H1 (cell line): ENCODE measurements at regions of chr4 and their contacts with region 1.

Region 1: DNA sequence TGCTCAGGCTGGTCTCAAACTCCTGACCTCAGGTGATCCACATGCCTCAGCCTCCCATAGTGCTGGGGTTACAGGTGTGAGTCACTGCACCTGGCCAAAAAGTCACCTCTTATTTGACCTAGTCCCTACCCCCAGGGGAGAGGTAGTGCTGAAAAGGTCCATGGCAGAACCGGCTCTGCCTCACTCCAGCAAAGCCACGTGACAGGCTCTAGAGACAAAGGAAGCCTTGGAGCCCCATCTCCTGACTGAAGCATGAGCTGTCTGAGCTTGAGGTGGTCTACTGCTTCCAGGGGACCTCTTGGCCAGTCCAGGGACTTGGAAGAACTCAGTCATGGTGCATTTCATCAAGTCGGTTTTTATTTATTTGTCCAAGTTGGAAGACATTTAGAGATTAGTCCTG is 52.5 kb upstream of the ZNF518B start:
- DNase-seq: no peak
- H3K4me3 ChIP-seq: no peak overlapping the region
- H3K27ac ChIP-seq: no peak overlapping the region
- H3K4me1 ChIP-seq: 0 out of 7 replicates have a peak, but pooled peaks cover 0 to 3% (median 0%) of the 10 kb centered on the region in 4 experiments
- H3K27me3 ChIP-seq: no peaks in the 10 kb centered on the region
- CTCF ChIP-seq: no peak
- EP300 ChIP-seq: no peak
- POLR2A ChIP-seq: no peak
- RAD21 ChIP-seq: no peak

Region 2: DNA sequence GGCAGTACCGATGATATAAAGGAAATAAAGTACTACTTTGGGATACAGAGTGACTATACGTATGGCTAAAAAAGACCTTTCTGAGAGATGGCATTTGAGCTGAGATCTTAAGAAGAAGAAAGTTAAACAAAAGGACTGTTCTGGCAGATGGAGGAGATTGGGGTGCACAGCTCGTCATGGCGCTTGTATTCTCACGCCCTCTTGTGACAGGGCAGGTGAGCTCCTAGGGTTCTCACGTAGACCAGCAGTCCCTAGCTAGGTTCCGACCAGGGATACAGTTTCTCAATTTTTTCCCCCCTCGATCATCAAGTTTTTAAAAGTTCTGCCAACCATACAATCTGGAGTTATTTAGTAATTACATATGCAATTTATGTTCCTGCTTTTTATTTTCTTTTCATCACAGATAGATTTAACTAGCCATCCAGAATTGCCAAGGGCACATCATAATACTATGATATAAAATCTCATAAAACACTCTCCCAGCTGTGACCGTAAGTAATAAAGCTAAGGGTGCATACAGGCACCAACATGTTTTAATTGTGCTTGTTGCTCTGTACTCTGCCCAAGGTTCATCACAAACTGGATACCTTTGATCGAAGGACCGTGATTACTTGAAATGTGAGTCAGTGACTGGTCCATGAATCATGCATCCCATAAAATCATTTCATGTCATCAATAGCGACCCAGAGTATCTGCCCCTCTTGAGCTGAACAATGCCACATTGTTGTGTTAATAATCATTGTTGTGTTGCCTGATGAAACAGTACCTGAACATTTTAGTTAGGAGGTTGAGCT is 16.9 kb after region 1 on chr4:
- CTCF ChIA-PET with region 1: interaction called, 11 read pairs
- POLR2A ChIA-PET with region 1: no interaction called
- DNase-seq: no peak
- H3K4me3 ChIP-seq: no peak overlapping the region
- H3K27ac ChIP-seq: no peak overlapping the region
- H3K4me1 ChIP-seq: no peaks in the 10 kb centered on the region
- H3K27me3 ChIP-seq: no peaks in the 10 kb centered on the region; a peak in 1 of 7 replicates
- CTCF ChIP-seq: peak; percentile 58 to 66 (median 61)
- EP300 ChIP-seq: no peak
- POLR2A ChIP-seq: no peak
- RAD21 ChIP-seq: peak; percentile 74 to 83

Region 3: DNA sequence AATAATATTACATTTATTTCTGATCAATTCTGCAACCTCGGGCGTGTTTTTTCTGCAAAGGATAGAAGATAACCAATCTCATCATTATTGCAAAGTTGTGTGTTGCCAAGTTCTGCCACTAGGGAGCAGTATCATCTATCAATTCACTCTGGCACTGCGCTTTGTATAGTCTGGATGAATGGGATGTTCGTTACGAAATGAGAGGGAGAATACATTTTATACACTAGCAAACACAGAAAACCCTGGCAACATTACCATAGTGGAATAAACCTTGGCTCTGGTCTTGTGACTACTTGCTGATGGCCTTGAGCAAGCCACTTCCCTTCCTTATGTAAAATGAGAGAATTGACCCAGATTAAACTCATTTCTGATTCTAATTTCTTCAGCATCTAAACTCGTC is 45.0 kb after region 1 on chr4:
- CTCF ChIA-PET with region 1: no interaction called
- POLR2A ChIA-PET with region 1: no interaction called
- DNase-seq: peak in 1 of 2 experiments; percentile 77
- H3K4me3 ChIP-seq: no peak overlapping the region
- H3K27ac ChIP-seq: no peak overlapping the region
- H3K4me1 ChIP-seq: no peaks in the 10 kb centered on the region
- H3K27me3 ChIP-seq: no peaks in the 10 kb centered on the region
- CTCF ChIP-seq: peak in 2 of 3 experiments; percentile 59 to 75; a peak in 3 of 4 replicates
- EP300 ChIP-seq: no peak
- POLR2A ChIP-seq: no peak
- RAD21 ChIP-seq: peak; percentile 85 to 86